ENCODE measurements at regions of chr9 and their contacts with region 1.

Region 1: GRCh38 chr9:130712564-130713285 is 19.1 kb downstream of the EXOSC2 start:
- DNase-seq: peak; percentile 95
- H3K4me3 ChIP-seq: peak overlapping the region; percentile 96
- H3K27me3 ChIP-seq: no peaks in the 10 kb centered on the region
- CTCF ChIP-seq: no peak

Region 2: GRCh38 chr9:130701056-130702022 is 11.4 kb before region 1 on chr9:
- CTCF ChIA-PET with region 1: interaction called, 10 read pairs
- POLR2A ChIA-PET with region 1: no interaction called
- DNase-seq: no peak
- H3K4me3 ChIP-seq: no peak overlapping the region
- H3K27me3 ChIP-seq: no peaks in the 10 kb centered on the region
- CTCF ChIP-seq: peak; percentile 99

Region 3: GRCh38 chr9:130884980-130885696 is 172.4 kb after region 1 on chr9:
- CTCF ChIA-PET with region 1: interaction called, 4 read pairs
- POLR2A ChIA-PET with region 1: interaction called, 31 read pairs
- DNase-seq: no peak
- H3K4me3 ChIP-seq: no peak overlapping the region
- H3K27me3 ChIP-seq: no peaks in the 10 kb centered on the region
- CTCF ChIP-seq: no peak

Region 4: DNA sequence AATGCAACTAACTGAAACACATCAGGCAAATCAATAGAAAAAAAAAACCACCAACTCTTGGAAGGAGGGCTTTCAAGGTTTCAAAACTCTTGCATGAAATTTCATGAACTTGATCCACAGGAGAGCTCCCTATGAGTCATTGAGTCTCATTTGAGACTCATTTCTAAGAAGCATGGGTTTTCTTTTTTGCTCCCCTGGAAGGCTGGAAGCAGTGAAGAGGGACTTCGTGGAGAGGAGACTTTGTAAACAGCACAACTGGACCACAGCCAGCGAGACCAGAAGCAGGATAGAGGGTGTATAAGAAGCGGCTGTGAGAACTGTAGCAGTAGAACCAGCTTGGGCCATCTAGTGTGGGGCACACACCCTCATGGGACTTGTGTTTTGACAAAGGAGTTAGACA is 1068.3 kb after region 1 on chr9:
- CTCF ChIA-PET with region 1: no interaction called
- POLR2A ChIA-PET with region 1: no interaction called
- DNase-seq: no peak
- H3K4me3 ChIP-seq: no peak overlapping the region
- H3K27me3 ChIP-seq: peaks cover 3% of the 10 kb centered on the region
- CTCF ChIP-seq: no peak